ENCODE measurements at regions of chr3 and their contacts with region 1.

Region 1: DNA sequence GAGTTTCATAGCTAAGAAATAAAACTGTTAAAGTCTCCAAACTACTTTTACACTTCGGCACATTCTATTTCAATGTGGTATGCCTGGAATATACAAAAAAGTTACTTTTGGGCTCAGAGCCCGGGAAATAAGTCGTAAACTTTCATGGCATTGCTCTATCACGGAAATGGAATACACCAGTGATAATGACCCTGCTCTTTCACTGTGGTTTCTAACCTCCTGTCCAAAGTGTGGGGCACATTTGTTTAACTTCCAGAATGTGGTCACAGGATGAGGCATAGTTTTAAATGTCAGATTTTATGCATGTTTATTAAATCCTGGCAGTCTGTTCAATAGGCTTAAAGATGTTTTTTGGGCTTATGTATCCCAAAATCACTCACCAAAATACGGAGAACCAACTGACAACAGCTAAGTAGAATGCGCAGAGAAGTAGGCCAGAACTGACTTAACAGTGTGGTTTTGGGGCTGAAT is 5.1 kb downstream of the CXCR6 start:
- DNase-seq: peak; percentile 89
- ATAC-seq: peak; percentile 88
- H3K4me3 ChIP-seq: no peak overlapping the region
- H3K27ac ChIP-seq: peak overlapping the region; percentile 82; the same call in 1 of the 2 replicates
- H3K4me1 ChIP-seq: peaks cover 37% of the 10 kb centered on the region
- H3K27me3 ChIP-seq: no peaks in the 10 kb centered on the region
- CTCF ChIP-seq: no peak
- POLR2A ChIP-seq: no peak
- RAD21 ChIP-seq: no peak

Region 2: GRCh38 chr3:45890405-45890804 is 57.9 kb before region 1 on chr3:
- CTCF ChIA-PET with region 1: no interaction called
- POLR2A ChIA-PET with region 1: no interaction called
- dilution Hi-C with region 1: no loop called
- in situ Hi-C with region 1: no loop called
- intact Hi-C with region 1: no loop called
- DNase-seq: no peak
- ATAC-seq: no peak
- H3K4me3 ChIP-seq: no peak overlapping the region
- H3K27ac ChIP-seq: no peak overlapping the region
- H3K4me1 ChIP-seq: no peaks in the 10 kb centered on the region; the same call in 1 of the 2 replicates
- H3K27me3 ChIP-seq: peaks cover 17% of the 10 kb centered on the region
- CTCF ChIP-seq: no peak
- POLR2A ChIP-seq: no peak
- RAD21 ChIP-seq: no peak

Region 3: GRCh38 chr3:45972534-45973402 is 24.4 kb after region 1 on chr3:
- CTCF ChIA-PET with region 1: no interaction called
- POLR2A ChIA-PET with region 1: interaction called, 3 read pairs
- dilution Hi-C with region 1: no loop called
- in situ Hi-C with region 1: no loop called
- intact Hi-C with region 1: loop called (anchors 2 kb)
- DNase-seq: peak; percentile 97
- ATAC-seq: peak; percentile 93
- H3K4me3 ChIP-seq: no peak overlapping the region
- H3K27ac ChIP-seq: peak overlapping the region; percentile 86
- H3K4me1 ChIP-seq: peaks cover 12% of the 10 kb centered on the region
- H3K27me3 ChIP-seq: no peaks in the 10 kb centered on the region
- CTCF ChIP-seq: no peak
- POLR2A ChIP-seq: no peak
- RAD21 ChIP-seq: peak; percentile 19

Region 4: DNA sequence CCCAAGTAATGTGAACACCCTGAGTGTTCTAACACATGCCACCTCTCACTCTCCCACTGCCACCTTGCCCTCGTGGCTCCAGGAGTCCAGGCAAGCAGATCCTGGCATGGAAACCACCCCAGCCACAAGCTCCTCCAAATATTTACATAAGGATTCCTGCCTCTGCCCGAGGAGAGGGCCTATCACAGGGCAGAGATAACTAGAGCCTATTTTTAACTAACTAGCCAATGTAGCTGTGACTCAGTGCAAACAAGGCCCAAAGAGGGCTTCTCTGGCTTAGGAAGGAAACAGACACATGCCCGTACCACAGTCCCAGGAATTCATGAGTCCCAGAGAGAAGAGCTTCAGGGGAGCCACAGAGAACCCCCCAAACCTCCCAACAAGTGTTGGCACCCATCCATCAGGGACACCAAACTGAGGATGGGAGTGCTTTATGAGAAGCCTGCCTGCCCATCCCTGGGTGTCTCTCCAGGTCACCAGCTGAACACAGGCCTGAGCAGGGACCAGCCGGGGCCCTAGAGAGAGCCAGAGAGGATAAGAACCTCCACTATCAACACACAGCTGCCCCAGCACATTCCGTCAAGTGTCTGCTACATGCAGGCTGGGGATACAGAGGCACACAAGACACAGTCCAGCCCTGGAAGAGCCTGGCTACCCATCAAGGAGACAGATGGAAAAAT is 38.1 kb after region 1 on chr3:
- CTCF ChIA-PET with region 1: interaction called, 4 read pairs
- POLR2A ChIA-PET with region 1: no interaction called
- dilution Hi-C with region 1: no loop called
- in situ Hi-C with region 1: no loop called
- intact Hi-C with region 1: loop called (anchors 2 kb)
- DNase-seq: peak; percentile 87
- ATAC-seq: peak; percentile 75
- H3K4me3 ChIP-seq: no peak overlapping the region
- H3K27ac ChIP-seq: peak overlapping the region; percentile 93
- H3K4me1 ChIP-seq: peaks cover 51% of the 10 kb centered on the region
- H3K27me3 ChIP-seq: no peaks in the 10 kb centered on the region
- CTCF ChIP-seq: no peak
- POLR2A ChIP-seq: no peak
- RAD21 ChIP-seq: no peak